Heart right ventricle (tissue), 16 donors: ENCODE measurements at regions of chr6 and their contacts with region 1.

Region 1: GRCh38 chr6:43070028-43070632 is 6.0 kb upstream of the PTK7 start:
- DNase-seq: no peak
- ATAC-seq: peak in 1 of 8 donors; percentile 27
- H3K4me3 ChIP-seq: no peak overlapping the region
- H3K27ac ChIP-seq: no peak overlapping the region
- H3K4me1 ChIP-seq: no peaks in the 10 kb centered on the region
- H3K27me3 ChIP-seq: no peaks in the 10 kb centered on the region
- CTCF ChIP-seq: peak in 8 of 9 donors; percentile 13 to 56 (median 43)

Region 2: DNA sequence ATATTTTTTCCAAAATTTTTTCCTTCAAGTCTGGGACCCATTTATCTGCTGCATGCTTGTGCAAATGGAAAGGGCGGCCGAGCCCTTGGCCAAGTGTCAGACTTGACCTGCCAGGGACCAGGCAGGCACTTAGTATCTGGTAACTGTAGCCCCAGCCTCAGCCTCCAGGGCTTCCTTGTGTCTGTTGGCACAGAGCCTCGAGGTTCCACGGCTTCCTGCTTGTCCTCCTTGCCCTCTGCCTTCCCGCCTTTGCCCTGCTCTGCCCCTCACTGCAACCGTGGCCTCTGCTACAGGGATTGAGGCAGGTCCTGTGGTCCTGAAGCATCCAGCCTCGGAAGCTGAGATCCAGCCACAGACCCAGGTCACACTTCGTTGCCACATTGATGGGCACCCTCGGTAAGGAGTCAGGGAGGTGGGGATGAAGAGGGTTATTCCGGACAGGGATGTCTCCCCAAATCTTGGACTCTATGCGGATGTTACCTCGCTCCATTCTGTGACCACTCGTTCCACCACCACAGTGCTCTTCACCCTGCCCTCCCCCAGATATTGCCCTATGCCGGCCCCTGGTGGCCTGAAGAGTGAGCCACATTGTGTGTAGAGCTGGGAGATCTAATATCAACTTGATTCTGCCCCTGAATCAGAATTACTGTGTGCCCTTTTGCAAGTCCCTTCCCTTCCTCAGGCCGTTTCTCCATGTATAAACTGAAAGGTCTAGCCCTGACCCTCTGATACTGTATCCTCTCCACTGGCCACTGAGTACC is 59.5 kb after region 1 on chr6:
- intact Hi-C with region 1: loop called in 2 of 10 experiments (anchors 5 to 10 kb)
- DNase-seq: peak in 1 of 2 donors; percentile 35
- ATAC-seq: peak; percentile 49 to 78 (median 72)
- H3K4me3 ChIP-seq: no peak overlapping the region
- H3K27ac ChIP-seq: no peak overlapping the region
- H3K4me1 ChIP-seq: peaks cover 0 to 12% (median 0%) of the 10 kb centered on the region in 9 donors
- H3K27me3 ChIP-seq: no peaks in the 10 kb centered on the region
- CTCF ChIP-seq: peak in 8 of 9 donors; percentile 28 to 65 (median 52)

Region 3: GRCh38 chr6:43143235-43144124 is 73.3 kb after region 1 on chr6:
- intact Hi-C with region 1: loop called in 2 of 10 experiments (anchors 5 to 10 kb)
- DNase-seq: peak; percentile 86 to 88
- ATAC-seq: peak; percentile 94 to 98 (median 96)
- H3K4me3 ChIP-seq: peak overlapping the region in 1 of 10 donors; percentile 22
- H3K27ac ChIP-seq: peak overlapping the region in 8 of 10 donors; percentile 2 to 69 (median 44)
- H3K4me1 ChIP-seq: peaks cover 7 to 23% (median 11%) of the 10 kb centered on the region in 9 donors
- H3K27me3 ChIP-seq: no peaks in the 10 kb centered on the region
- CTCF ChIP-seq: peak; percentile 84 to 99 (median 94)